GM12878 (cell line): ENCODE measurements at regions of chr5 and their contacts with region 1.

Region 1: GRCh38 chr5:23352437-23352836 is 155.0 kb upstream of the PRDM9 start:
- DNase-seq: no peak
- ATAC-seq: peak; percentile 72
- H3K4me3 ChIP-seq: no peak overlapping the region
- H3K27ac ChIP-seq: no peak overlapping the region
- H3K4me1 ChIP-seq: no peaks in the 10 kb centered on the region
- H3K27me3 ChIP-seq: no peaks in the 10 kb centered on the region
- CTCF ChIP-seq: peak in 1 of 3 experiments; percentile 42; a peak in 1 of 6 replicates
- EP300 ChIP-seq: no peak
- POLR2A ChIP-seq: no peak
- RAD21 ChIP-seq: no peak

Region 2: DNA sequence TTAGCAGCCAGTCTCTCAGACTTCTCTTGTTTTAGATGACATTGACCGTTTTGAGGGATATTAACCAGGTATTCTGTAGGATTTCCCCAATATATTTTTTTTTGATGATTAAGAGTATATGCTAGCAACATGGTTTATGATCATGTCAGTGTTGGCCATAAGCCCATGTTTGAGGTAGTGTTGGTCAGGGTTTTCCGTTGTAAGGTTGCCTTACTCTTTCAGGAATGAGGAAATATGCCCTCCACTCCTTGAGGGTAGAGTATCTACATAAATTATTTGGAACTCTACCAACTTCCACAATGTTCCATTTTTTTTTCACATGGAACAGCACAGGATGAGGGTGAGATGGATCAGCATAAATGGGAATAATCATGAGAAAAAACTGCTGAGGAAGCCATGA is 33.5 kb before region 1 on chr5:
- CTCF ChIA-PET with region 1: no interaction called
- POLR2A ChIA-PET with region 1: no interaction called
- RAD21 ChIA-PET with region 1: no interaction called
- SMC1A ChIA-PET with region 1: no interaction called
- in situ Hi-C with region 1: no loop called
- intact Hi-C with region 1: no loop called
- DNase-seq: no peak
- ATAC-seq: no peak
- H3K4me3 ChIP-seq: no peak overlapping the region
- H3K27ac ChIP-seq: no peak overlapping the region
- H3K4me1 ChIP-seq: no peaks in the 10 kb centered on the region
- H3K27me3 ChIP-seq: no peaks in the 10 kb centered on the region
- CTCF ChIP-seq: no peak
- EP300 ChIP-seq: no peak
- POLR2A ChIP-seq: no peak
- RAD21 ChIP-seq: no peak

Region 3: DNA sequence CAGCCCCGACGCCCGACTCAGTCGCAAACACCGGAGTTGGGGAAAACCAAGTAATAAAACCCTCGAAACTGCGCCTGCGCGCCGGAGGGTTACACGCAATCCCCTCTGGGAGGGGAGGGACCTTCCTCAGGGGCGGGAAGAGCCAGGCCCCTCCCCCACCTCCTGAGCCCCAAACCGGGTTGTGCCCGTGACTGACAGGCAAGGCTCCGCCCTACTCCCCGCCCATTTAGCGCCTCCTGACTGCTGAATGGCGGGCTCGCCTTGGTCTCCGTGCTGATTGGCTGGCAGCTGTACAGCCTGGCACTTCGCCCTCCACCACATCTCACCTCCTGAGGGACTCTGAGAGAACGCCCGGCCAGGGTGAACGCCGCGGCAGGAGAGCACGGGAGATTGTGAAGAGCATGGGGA is 154.8 kb after region 1 on chr5 and contains the start of gene PRDM9:
- CTCF ChIA-PET with region 1: no interaction called
- POLR2A ChIA-PET with region 1: no interaction called
- RAD21 ChIA-PET with region 1: no interaction called
- SMC1A ChIA-PET with region 1: no interaction called
- in situ Hi-C with region 1: no loop called
- intact Hi-C with region 1: loop called (anchors 5 kb)
- DNase-seq: no peak
- ATAC-seq: no peak
- H3K4me3 ChIP-seq: no peak within 1 kb of the TSS
- H3K27ac ChIP-seq: no peak within 1 kb of the TSS
- H3K4me1 ChIP-seq: no peaks in the 10 kb centered on the region
- H3K27me3 ChIP-seq: no peaks in the 10 kb centered on the region
- CTCF ChIP-seq: no peak
- EP300 ChIP-seq: no peak
- POLR2A ChIP-seq: no peak
- RAD21 ChIP-seq: no peak
- polyA plus RNA-seq, gene PRDM9: not detected